Mucosa of descending colon (tissue), 3 donors: ENCODE measurements at regions of chr1 and their contacts with region 1.

Region 1: DNA sequence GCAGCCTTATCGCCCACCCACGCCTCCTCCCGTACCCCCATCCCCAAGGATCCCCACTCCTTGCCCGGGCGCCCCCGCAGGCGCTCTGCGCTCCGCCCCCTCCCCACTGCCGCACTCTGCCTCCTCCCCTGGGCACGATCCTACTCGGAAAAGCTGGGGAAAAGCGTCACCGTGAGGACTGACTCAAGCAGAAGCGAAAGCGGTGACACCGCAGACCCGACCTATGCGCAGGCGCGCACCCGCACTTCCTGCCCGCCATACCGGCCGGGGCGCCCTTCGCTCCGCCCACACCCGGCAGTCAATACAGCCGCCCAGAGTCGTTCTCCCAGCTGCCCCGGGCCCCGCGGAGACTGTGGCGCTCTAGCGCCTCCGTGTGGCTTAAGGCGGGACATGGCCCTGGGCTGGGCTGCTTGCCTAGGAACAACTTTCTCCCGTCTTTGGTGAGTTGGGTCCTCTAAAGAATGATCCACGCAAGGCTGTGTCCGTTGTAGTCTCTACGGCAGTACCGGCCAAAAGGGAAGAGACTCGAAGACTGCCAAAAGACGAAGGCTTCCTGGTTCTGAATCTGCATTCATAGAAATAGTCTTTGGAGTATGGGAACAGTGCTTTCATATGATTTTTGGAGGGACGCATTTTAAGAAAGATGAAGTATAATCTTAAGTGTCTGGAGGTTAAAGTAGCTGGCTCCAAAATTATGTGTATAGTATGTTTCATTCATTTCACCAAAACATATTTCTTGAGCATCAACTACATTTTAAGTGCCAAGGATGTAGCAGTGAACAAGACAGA is at the start of gene OMA1:
- DNase-seq: peak; percentile 97 to 99 (median 99)
- ATAC-seq: peak; percentile 99
- H3K4me3 ChIP-seq: peak within 1 kb of the TSS; percentile 84
- H3K4me1 ChIP-seq: peaks cover 4% of the 10 kb centered on the region
- CTCF ChIP-seq: peak; percentile 97
- total RNA-seq, gene OMA1: 20.4 to 42.4 (median 32.4) TPM

Region 2: GRCh38 chr1:58460469-58460868 is 86.2 kb before region 1 on chr1:
- intact Hi-C with region 1: no loop called
- DNase-seq: no peak
- ATAC-seq: no peak
- H3K4me3 ChIP-seq: no peak overlapping the region
- H3K4me1 ChIP-seq: no peaks in the 10 kb centered on the region
- CTCF ChIP-seq: no peak

Region 3: DNA sequence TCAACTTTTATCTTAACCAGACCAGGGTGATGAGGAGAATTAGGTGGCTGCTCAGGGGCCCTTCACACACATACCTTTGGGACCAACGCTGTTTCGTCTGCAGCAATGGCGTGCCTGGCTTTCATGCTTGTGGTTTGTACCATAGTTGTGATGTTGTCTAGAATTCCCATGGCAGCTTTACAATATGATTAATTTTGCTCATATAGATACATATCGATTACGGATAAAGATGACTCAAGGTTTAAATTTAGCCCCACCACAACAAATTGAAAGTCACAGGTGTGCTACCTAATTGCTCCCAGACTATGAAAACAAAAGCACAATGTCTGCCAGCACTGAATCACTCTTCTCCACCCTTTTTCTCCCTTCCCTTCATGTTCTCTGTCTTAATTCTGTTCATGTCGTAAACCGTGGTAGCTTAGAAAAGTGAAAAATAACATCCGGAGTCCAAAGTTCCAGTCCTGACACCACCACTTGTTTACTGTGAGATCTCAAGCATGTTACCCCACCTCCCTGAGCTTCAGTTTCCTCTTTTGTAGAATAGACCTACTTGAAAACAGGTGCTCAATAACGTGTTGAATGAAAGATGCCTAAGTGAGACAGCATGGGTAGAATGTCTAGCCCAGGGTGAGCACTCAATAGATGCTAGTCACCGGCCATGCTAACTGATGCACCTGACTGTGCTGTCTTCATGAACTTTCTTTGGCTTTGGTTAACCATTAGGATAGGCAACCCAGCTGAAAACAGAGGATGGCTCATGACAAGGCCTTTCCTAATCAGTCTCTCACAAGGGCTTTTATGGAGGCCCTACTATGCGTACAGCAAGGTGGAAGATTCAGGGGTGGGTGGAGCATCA is 259.2 kb after region 1 on chr1:
- intact Hi-C with region 1: no loop called
- DNase-seq: peak in 1 of 3 donors; percentile 65
- ATAC-seq: peak; percentile 85
- H3K4me3 ChIP-seq: no peak overlapping the region
- H3K4me1 ChIP-seq: peaks cover 21% of the 10 kb centered on the region
- CTCF ChIP-seq: no peak

Region 4: DNA sequence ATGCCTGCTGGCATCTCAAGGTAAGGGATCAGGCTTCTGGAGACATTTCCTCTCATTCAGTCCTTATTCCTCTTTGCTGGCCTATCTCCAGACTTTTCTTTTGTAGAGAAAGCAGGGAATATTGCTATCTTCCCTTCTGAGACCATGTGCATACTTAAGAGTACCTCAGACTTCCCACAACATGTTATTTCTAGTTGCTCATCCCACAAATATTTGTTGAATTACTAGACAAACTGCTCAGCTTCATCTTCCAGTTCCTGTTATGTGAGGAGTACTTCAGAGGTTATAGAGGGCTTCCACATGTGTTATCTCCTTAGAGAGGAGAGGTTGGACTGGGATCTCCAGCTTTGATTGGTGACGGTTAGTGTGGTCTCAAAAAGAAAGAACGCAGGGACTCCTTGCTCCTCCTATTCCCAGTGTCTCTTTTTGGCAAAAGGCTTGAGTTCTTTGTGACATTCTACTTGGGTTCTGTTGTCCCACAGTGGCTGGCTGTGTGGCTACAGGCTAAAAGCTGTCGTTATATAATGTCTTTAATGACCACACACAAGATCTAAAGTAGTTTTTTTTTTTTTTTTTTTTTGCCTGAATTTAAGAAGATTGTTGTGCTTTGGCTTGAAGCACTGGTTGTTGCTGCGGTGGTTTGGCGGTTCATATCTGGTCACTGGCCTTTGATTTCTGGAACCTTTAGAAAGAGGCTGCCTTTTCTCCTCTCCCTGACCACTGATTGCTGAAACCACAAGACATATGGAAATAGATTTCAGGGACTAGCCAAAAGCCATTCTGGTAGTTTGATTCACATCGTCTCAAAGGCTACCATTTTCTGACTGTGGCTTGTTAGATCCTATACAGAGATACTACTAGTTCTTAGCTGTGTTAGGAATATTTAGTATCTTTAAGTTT is 828.9 kb after region 1 on chr1:
- intact Hi-C with region 1: loop called in 1 of 2 experiments (anchors 5 kb)
- DNase-seq: no peak
- ATAC-seq: peak; percentile 24
- H3K4me3 ChIP-seq: no peak overlapping the region
- H3K4me1 ChIP-seq: no peaks in the 10 kb centered on the region
- CTCF ChIP-seq: no peak